OCI-LY7 (cell line): ENCODE measurements at regions of chr7 and their contacts with region 1.

Region 1: GRCh38 chr7:28787106-28787505 is 171.0 kb downstream of the TRIL start:
- DNase-seq: peak; percentile 31
- H3K4me3 ChIP-seq: no peak overlapping the region
- H3K27ac ChIP-seq: no peak overlapping the region
- H3K4me1 ChIP-seq: peaks cover 14% of the 10 kb centered on the region
- CTCF ChIP-seq: no peak

Region 2: GRCh38 chr7:28808796-28809527 is 21.9 kb after region 1 on chr7:
- CTCF ChIA-PET with region 1: no interaction called
- POLR2A ChIA-PET with region 1: interaction called, 3 read pairs
- intact Hi-C with region 1: loop called (anchors 2 kb)
- DNase-seq: peak; percentile 28
- H3K4me3 ChIP-seq: no peak overlapping the region
- H3K27ac ChIP-seq: no peak overlapping the region
- H3K4me1 ChIP-seq: peaks cover 8% of the 10 kb centered on the region
- CTCF ChIP-seq: peak; percentile 60